ENCODE measurements at regions of chr22 and their contacts with region 1.

Region 1: DNA sequence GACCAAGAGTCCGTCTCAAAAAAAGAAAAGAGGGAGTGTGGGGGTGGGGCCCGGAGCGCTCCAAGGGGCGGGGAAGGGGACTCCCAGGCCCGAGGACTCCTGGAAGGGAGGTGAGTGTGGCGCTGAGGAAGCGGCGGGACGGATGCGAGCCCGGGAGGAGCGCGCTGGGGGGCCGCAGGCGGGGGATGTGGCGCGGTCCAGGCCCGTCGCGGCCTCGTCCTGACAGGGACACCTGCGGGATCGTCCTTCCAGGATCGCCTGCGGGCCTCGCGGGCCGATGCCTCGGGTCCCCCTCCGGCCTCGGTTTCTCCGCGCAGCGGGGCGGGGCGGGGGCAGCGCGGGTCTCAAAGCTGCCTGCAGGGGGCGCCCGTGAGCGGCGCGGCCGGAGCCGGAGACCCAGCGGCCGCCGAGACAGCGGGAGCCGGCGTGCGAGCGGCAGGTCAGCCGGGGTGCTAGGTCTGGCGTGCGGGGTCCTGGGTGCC is 3.8 kb upstream of the ADORA2A start:
- DNase-seq: no peak
- H3K4me3 ChIP-seq: peak overlapping the region in 2 of 3 experiments; percentile 54
- H3K27ac ChIP-seq: no peak overlapping the region
- H3K4me1 ChIP-seq: peaks cover 28% of the 10 kb centered on the region
- H3K27me3 ChIP-seq: peaks cover 3% of the 10 kb centered on the region
- CTCF ChIP-seq: peak; percentile 42 to 62

Region 2: GRCh38 chr22:24244101-24244787 is 179.3 kb before region 1 on chr22:
- CTCF ChIA-PET with region 1: no interaction called
- dilution Hi-C with region 1: no loop called
- in situ Hi-C with region 1: no loop called
- intact Hi-C with region 1: no loop called
- DNase-seq: no peak
- H3K4me3 ChIP-seq: no peak overlapping the region
- H3K27ac ChIP-seq: no peak overlapping the region
- H3K4me1 ChIP-seq: peaks cover 21% of the 10 kb centered on the region
- H3K27me3 ChIP-seq: no peaks in the 10 kb centered on the region
- CTCF ChIP-seq: no peak

Region 3: GRCh38 chr22:24390576-24390975 is 33.0 kb before region 1 on chr22:
- CTCF ChIA-PET with region 1: no interaction called
- dilution Hi-C with region 1: no loop called
- in situ Hi-C with region 1: no loop called
- intact Hi-C with region 1: no loop called
- DNase-seq: no peak
- H3K4me3 ChIP-seq: no peak overlapping the region
- H3K27ac ChIP-seq: no peak overlapping the region
- H3K4me1 ChIP-seq: peaks cover 4% of the 10 kb centered on the region
- H3K27me3 ChIP-seq: no peaks in the 10 kb centered on the region
- CTCF ChIP-seq: no peak

Region 4: DNA sequence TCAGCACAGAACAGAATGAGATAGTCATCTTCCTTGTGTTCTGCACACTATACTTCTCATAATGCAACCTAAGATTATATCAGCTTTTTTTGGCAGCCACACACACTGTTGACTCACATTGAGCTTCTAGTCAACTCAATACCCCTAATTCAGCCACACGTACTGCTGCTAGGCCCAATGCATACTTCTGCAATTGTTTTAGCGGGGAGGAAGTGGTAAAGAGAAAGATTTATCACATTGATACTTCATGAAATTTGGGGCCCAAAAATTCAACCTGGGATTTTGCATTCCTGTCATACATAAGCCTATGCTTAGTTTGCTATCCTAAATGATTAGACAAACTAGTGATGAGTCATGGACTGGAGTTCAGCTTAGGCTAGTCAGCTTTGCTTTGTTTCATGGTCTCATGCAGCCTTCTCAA is 63.0 kb after region 1 on chr22:
- CTCF ChIA-PET with region 1: no interaction called
- dilution Hi-C with region 1: no loop called
- in situ Hi-C with region 1: no loop called
- intact Hi-C with region 1: loop called (anchors 5 kb)
- DNase-seq: peak; percentile 95
- H3K4me3 ChIP-seq: no peak overlapping the region
- H3K27ac ChIP-seq: no peak overlapping the region
- H3K4me1 ChIP-seq: peaks cover 51% of the 10 kb centered on the region
- H3K27me3 ChIP-seq: no peaks in the 10 kb centered on the region
- CTCF ChIP-seq: no peak

Region 5: DNA sequence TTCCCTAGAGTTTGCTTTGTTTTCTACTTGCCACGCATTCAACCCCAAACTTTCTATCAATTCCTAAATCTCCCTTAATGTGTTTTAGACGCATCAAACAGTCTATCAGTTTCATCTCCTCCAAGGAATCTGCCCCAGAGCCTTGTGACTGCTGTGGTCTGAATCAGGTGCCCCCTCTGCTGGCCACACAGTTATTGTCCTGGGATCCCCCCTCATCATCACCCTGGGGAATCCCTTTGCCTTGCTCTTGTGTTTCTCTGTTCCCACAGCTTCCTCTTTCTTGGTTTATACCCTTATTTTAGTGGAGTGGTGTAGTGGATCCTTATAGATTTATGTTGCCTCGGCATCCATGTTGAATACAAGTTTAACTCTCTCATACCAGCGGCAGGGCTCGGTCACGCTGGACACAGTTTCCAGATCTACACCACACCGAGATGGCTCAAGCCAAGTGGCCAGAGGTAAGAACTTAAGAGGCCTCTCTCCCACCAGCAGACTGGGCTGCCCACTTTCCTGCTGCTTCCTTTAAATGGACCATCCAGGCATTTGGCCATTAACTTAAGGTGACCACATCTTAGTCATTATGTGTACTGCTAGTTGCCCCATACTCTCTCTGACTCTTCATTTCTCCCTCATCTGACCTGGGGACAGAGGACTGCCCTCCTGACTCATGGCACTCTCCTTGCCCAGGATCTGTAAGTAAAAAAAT is 79.7 kb after region 1 on chr22:
- CTCF ChIA-PET with region 1: no interaction called
- dilution Hi-C with region 1: no loop called
- in situ Hi-C with region 1: no loop called
- intact Hi-C with region 1: loop called (anchors 1 kb)
- DNase-seq: peak; percentile 56
- H3K4me3 ChIP-seq: no peak overlapping the region
- H3K27ac ChIP-seq: no peak overlapping the region
- H3K4me1 ChIP-seq: no peaks in the 10 kb centered on the region
- H3K27me3 ChIP-seq: no peaks in the 10 kb centered on the region
- CTCF ChIP-seq: peak; percentile 69 to 78